Cardiac septum (tissue), 1 donor: ENCODE measurements at regions of chr2 and their contacts with region 1.

Region 1: DNA sequence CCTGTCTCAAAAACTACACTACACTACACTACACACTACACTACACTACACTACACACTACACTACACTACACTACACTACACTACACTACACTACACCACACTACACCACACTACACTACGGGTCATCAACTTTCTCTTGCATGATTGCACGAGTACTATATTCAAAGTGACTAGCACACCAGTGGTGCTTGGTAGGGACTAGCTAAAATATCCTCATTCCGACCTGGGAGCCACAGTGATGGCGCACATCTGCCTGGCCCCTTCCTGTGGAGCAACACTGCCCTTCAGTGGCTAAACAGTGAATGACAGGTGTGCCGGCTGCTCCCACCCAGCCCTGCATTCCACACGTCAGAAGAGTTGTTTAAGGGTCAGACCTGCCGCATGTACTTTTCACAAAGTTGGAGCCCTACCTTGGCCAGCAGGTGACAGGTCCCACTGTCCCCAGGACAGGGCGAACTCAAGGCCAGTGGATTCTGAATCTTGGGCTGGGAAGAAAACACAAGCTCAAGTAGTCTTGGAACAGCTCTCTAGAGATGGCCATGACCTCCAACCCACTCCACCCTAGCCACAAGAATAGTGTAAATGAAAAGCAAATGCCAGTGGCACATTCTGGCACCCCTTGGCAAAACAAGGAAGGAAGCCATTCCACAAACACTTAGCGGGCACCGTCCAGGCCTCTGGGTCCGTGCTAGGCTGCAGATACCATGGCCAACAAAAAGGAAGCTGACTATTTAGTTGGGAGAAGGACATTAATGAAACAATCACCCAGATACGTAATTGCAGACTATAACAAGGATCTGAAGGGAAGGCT is 79.7 kb upstream of the MSH2 start:
- DNase-seq: peak; percentile 90

Region 2: DNA sequence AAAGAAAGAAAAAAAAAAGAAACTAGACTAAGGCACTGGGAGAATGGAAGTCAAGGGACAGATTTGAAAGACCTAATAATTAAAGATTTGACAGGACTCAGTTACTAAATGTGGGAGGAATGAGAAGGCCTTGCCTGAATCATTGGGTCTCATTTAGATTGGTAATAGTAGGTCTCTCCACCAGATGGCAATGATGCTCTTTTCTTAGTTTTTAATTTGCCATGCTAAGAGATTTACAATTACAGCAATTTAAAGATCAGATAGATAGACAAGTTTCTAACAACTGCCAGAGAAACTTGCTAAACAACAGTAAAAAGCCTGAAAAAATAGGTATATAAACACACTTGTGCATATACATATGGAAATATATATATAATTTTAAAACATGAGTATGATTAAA is 690.9 kb before region 1 on chr2:
- intact Hi-C with region 1: loop called (anchors 5 kb)
- DNase-seq: no peak

Region 3: DNA sequence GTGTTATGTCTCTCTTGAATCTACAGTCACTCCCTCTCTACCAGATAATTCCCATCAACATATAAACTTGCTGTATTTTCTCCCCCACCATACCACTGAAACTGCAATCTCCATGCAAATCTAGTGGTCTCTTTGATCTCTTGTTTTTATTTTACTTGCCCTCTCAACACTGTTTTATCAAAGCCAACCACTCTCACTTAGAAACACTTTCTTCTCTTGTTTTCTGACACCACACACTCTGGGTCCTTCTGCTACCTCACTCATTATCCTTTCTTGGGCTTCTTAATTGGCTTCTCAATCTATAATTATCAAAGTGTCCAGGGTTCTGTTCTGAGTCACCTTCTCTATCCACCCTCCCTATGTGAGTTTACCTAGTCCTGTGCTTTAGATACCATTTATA is 405.6 kb before region 1 on chr2:
- intact Hi-C with region 1: loop called (anchors 2 kb)
- DNase-seq: no peak

Region 4: GRCh38 chr2:46988733-46989481 is 334.3 kb before region 1 on chr2:
- intact Hi-C with region 1: loop called (anchors 1 kb)
- DNase-seq: no peak